BJ (cell line): ENCODE measurements at regions of chr16 and their contacts with region 1.

Region 1: DNA sequence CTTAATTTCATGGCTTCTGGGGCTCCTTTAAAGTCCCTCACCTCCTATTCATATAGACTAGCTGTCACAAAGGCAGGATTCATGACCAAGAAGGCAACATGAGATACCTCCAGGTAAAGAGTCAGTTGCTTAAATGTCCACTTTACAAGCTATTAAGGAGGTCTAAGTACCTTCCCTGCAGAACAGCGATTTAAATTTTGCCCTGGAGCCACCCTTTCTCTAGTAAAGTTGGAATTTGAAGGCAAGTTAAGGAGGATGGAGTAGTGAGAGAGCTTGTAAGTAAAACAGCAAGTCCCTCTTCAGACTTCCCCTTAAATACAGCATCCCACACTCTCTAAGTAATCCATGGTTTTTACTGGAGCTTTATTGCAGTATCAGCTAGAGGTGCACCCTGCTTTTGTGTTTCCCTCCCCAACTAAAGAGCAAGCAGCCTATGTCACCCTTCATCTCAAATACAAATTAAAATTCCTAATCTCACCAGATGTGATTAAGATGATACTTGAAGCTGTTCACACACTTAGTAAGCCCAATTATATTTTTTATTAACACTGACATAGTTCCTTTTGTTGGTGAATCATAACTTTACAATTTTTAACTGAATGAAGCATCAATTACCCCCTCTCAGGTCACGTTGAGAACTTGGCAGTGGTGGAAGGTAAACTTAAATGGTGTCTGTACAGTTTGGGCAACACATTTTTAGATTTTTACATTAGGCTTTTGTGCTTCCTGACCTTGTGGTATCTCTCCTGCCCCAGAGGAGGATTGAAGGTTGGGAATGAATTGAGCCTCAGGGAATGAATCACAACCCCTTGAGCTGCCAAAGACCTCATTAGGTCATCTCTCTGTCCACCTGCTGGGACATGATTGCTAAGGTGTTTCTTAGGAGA is 108.9 kb downstream of the TANGO6 start:
- DNase-seq: no peak
- H3K4me3 ChIP-seq: no peak overlapping the region
- H3K27me3 ChIP-seq: no peaks in the 10 kb centered on the region
- CTCF ChIP-seq: no peak

Region 2: DNA sequence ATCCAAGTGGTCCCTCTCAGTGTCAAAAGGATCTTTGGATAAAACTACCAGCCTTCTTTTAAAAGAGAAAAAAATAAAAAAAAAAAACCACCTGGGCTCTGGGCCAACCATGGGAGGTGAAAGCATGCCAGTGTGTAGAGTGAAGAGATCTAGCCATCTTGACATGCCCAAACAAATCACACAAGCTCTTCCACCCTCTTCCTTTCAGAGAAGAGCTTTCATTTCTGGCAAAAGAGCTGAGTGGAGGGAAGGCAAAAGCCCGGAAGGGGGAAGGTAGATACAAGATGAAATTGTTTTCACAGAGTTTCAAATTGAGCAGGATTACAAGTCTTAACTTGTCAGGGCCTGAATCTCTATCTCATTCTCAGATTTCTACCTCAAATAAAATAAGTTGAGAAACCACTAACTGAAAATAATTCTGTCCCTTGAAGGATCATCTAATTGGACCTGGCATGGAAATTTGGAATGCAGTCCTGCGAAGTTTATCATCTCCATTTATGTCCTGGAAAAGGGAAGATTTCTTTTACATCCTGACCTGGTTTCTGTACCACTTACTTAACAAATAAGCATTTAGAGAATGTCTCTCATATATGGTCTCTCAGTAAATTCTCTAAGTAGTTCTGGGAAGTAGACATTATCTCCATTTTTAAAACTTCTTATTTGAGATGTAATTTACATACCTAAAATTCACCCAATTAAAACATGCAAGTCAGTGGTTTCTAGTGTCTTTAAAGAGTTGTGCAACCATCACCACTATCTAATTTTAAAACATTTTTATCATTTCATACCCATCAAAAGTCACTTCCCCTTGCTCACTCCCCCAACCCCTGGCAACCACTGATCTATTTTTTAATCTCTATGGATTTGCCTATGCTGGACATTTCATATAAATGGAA is 15.2 kb before region 1 on chr16:
- CTCF ChIA-PET with region 1: no interaction called
- POLR2A ChIA-PET with region 1: interaction called, 18 read pairs
- DNase-seq: peak; percentile 47
- H3K4me3 ChIP-seq: no peak overlapping the region
- H3K27me3 ChIP-seq: no peaks in the 10 kb centered on the region
- CTCF ChIP-seq: no peak

Region 3: DNA sequence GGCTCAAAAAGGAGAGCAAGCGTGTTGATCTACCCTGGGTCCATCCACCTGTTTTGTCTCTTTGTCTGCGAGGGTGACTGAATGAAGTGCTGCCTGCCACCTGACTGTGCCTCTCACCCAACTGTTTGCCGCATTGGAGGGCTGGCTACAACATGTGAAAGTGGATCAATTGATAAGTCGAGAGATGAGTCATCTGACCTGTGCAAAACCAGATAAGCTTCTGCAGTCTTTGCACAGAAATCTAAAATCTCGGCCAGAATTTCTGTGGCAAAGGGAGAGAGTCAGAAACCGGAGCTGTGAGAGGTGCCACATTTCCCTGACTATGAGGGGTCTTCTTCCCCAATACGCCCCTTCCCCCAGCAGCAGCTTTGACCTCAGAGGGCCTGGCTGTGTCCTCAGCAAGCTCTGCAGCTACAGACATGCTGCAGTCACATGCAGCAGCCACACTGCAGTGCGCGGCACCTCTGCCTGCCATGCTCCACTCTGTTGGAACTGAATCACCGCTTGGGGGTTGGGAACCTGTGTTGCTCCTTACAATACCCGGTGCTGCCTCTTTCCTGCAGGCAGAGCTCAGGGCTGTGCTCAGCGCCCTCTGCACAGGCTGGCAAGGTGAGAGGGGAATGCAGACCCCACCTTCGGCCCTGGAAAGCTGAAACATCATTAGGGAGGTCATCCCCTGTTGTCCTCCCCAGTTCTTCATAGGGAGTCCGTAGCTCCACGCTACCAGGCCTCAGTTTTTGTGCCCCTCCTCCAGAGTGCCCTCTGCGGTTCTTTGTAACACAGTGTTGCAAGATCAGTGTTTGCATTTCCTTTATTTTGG is 137.1 kb after region 1 on chr16:
- CTCF ChIA-PET with region 1: no interaction called
- POLR2A ChIA-PET with region 1: interaction called, 10 read pairs
- DNase-seq: no peak
- H3K4me3 ChIP-seq: no peak overlapping the region
- H3K27me3 ChIP-seq: no peaks in the 10 kb centered on the region
- CTCF ChIP-seq: no peak